ENCODE measurements at regions of chr5 and their contacts with region 1.

Region 1: GRCh38 chr5:114449860-114450421 is 88.1 kb downstream of the KCNN2 start:
- DNase-seq: peak; percentile 60
- ATAC-seq: peak; percentile 97
- H3K4me3 ChIP-seq: no peak overlapping the region
- H3K27ac ChIP-seq: no peak overlapping the region
- H3K4me1 ChIP-seq: no peaks in the 10 kb centered on the region
- H3K27me3 ChIP-seq: no peaks in the 10 kb centered on the region
- CTCF ChIP-seq: peak; percentile 84 to 98 (median 89)
- EP300 ChIP-seq: no peak
- POLR2A ChIP-seq: no peak
- RAD21 ChIP-seq: peak; percentile 87

Region 2: GRCh38 chr5:113612060-113612496 is 837.9 kb before region 1 on chr5:
- CTCF ChIA-PET with region 1: interaction called, 20 read pairs
- POLR2A ChIA-PET with region 1: no interaction called
- RAD21 ChIA-PET with region 1: interaction called, 8 read pairs
- SMC1A ChIA-PET with region 1: interaction called, 10 read pairs
- in situ Hi-C with region 1: loop called (anchors 5 kb)
- intact Hi-C with region 1: loop called (anchors 2 kb)
- DNase-seq: no peak
- ATAC-seq: peak; percentile 87
- H3K4me3 ChIP-seq: no peak overlapping the region
- H3K27ac ChIP-seq: no peak overlapping the region
- H3K4me1 ChIP-seq: no peaks in the 10 kb centered on the region
- H3K27me3 ChIP-seq: no peaks in the 10 kb centered on the region
- CTCF ChIP-seq: peak; percentile 36 to 77 (median 53); a peak in 4 of 6 replicates
- EP300 ChIP-seq: no peak
- POLR2A ChIP-seq: no peak
- RAD21 ChIP-seq: peak; percentile 81

Region 3: GRCh38 chr5:114223866-114224265 is 226.1 kb before region 1 on chr5:
- CTCF ChIA-PET with region 1: interaction called, 10 read pairs
- POLR2A ChIA-PET with region 1: no interaction called
- RAD21 ChIA-PET with region 1: no interaction called
- SMC1A ChIA-PET with region 1: interaction called, 4 read pairs
- in situ Hi-C with region 1: no loop called
- intact Hi-C with region 1: no loop called
- DNase-seq: no peak
- ATAC-seq: peak; percentile 70
- H3K4me3 ChIP-seq: no peak overlapping the region
- H3K27ac ChIP-seq: no peak overlapping the region
- H3K4me1 ChIP-seq: no peaks in the 10 kb centered on the region
- H3K27me3 ChIP-seq: no peaks in the 10 kb centered on the region
- CTCF ChIP-seq: peak; percentile 21 to 36 (median 35); a peak in 2 of 6 replicates
- EP300 ChIP-seq: no peak
- POLR2A ChIP-seq: no peak
- RAD21 ChIP-seq: peak; percentile 24; the same call in 1 of the 2 replicates

Region 4: DNA sequence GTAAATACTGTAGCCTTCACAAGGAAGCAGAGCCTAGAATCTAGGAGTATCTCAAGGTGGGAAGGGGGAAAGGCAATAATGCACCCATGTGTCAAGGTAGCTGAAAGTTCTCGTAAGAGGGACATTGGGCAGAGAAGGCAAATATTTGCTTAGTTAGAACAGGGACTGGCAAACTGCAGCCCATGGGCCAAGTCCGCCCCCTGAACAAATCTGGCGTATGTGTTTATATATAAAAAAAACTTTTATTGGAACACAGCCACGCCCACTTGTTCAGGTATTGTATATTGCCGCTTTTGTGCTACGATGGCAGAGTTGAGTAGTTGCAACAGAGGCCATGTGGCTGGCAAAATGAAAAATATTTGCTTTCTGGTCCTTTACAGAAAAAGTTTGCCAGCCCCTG is 72.0 kb before region 1 on chr5:
- CTCF ChIA-PET with region 1: interaction called, 16 read pairs
- POLR2A ChIA-PET with region 1: interaction called, 5 read pairs
- RAD21 ChIA-PET with region 1: interaction called, 4 read pairs
- SMC1A ChIA-PET with region 1: interaction called, 21 read pairs
- in situ Hi-C with region 1: no loop called
- intact Hi-C with region 1: no loop called
- DNase-seq: no peak
- ATAC-seq: no peak
- H3K4me3 ChIP-seq: no peak overlapping the region
- H3K27ac ChIP-seq: no peak overlapping the region
- H3K4me1 ChIP-seq: no peaks in the 10 kb centered on the region
- H3K27me3 ChIP-seq: no peaks in the 10 kb centered on the region
- CTCF ChIP-seq: no peak
- EP300 ChIP-seq: no peak
- POLR2A ChIP-seq: no peak
- RAD21 ChIP-seq: no peak

Region 5: GRCh38 chr5:114427204-114427603 is 22.7 kb before region 1 on chr5:
- CTCF ChIA-PET with region 1: interaction called, 15 read pairs
- POLR2A ChIA-PET with region 1: interaction called, 4 read pairs
- RAD21 ChIA-PET with region 1: interaction called, 148 read pairs
- SMC1A ChIA-PET with region 1: interaction called, 172 read pairs
- in situ Hi-C with region 1: no loop called
- intact Hi-C with region 1: no loop called
- DNase-seq: no peak
- ATAC-seq: no peak
- H3K4me3 ChIP-seq: no peak overlapping the region
- H3K27ac ChIP-seq: no peak overlapping the region
- H3K4me1 ChIP-seq: no peaks in the 10 kb centered on the region; the same call in 1 of the 2 replicates
- H3K27me3 ChIP-seq: no peaks in the 10 kb centered on the region
- CTCF ChIP-seq: no peak
- EP300 ChIP-seq: no peak
- POLR2A ChIP-seq: no peak
- RAD21 ChIP-seq: no peak

Region 6: DNA sequence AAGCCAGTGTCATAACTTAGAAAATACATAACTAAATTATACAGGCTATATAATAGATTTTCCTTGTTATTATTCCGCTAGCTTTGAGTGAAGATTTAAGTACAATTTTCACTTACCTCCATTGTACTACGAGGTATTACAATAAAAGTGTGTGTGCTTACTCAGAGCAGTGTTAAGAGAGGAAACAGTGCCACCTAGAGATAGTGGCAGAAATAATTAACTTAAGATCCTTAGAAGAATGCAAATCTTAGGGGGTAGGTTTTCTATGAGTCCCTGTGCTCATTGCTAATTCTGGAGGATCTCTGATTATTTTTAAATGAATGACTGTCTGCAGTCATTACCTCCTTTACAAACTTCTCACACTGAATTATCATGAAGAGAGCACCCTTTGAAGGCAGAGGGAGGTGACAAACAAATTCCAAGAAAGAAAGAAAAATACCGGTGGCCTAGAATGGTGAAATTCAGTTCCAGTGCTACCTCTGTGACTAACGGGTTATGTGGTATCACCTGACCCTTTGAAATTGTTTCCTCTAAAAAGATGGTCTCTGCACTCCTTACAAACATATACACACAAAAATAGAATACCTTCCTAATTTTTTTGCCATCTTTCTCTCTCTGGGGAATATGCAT is 339.9 kb after region 1 on chr5:
- CTCF ChIA-PET with region 1: interaction called, 7 read pairs
- POLR2A ChIA-PET with region 1: no interaction called
- RAD21 ChIA-PET with region 1: no interaction called
- SMC1A ChIA-PET with region 1: no interaction called
- in situ Hi-C with region 1: no loop called
- intact Hi-C with region 1: loop called (anchors 5 kb)
- DNase-seq: no peak
- ATAC-seq: peak; percentile 83
- H3K4me3 ChIP-seq: no peak overlapping the region
- H3K27ac ChIP-seq: no peak overlapping the region
- H3K4me1 ChIP-seq: no peaks in the 10 kb centered on the region
- H3K27me3 ChIP-seq: no peaks in the 10 kb centered on the region; a peak in 1 of 4 replicates
- CTCF ChIP-seq: peak; percentile 28 to 64 (median 53); a peak in 5 of 6 replicates
- EP300 ChIP-seq: no peak
- POLR2A ChIP-seq: no peak
- RAD21 ChIP-seq: peak; percentile 60

Region 7: GRCh38 chr5:115586601-115587048 is 1136.7 kb after region 1 on chr5:
- CTCF ChIA-PET with region 1: no interaction called
- POLR2A ChIA-PET with region 1: no interaction called
- RAD21 ChIA-PET with region 1: no interaction called
- SMC1A ChIA-PET with region 1: no interaction called
- in situ Hi-C with region 1: loop called (anchors 25 kb)
- intact Hi-C with region 1: no loop called
- DNase-seq: no peak
- ATAC-seq: peak; percentile 71
- H3K4me3 ChIP-seq: no peak overlapping the region
- H3K27ac ChIP-seq: no peak overlapping the region
- H3K4me1 ChIP-seq: peaks cover 12% of the 10 kb centered on the region; the same call in 1 of the 2 replicates
- H3K27me3 ChIP-seq: no peaks in the 10 kb centered on the region
- CTCF ChIP-seq: peak; percentile 9 to 60 (median 51); a peak in 5 of 6 replicates
- EP300 ChIP-seq: no peak
- POLR2A ChIP-seq: no peak
- RAD21 ChIP-seq: peak; percentile 81